ENCODE measurements at regions of chr9 and their contacts with region 1.

Region 1: DNA sequence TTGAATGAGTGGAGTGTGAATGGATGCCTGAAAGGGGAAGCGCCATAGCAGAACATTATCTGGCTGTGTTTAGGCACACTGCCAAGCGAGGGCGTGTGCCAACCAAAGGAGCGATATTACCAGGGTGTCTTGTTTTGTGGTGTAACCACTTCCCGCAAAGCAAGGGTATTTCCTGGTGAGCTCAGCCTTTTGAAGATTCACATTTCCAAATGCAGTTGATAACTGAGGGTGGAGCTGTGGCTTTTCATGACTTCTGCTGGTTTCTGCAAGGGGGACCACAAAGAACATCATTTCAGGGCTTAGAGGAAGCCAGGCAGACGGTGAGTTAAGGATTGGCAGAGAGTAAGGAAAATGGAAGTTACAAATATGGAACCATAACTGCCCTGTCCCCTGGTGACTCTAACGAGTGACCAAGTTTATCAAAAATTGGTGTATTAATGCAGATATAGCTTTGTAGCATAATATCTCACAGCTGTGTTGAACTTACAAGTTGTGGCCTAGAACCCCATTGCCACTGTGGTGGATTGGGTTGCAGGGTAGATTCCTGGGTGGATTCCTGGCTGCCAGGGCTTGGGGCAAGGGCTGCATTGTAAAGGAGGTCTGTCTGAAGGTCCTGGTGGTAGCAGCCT is 71.4 kb downstream of the RALGPS1 start:
- DNase-seq: peak; percentile 71 to 99 (median 84)
- ATAC-seq: peak; percentile 73
- H3K4me3 ChIP-seq: peak overlapping the region in 1 of 2 experiments; percentile 26
- H3K4me3 Mint-ChIP-seq: peak overlapping the region; percentile 68
- H3K27ac ChIP-seq: peak overlapping the region; percentile 23 to 27
- H3K27ac Mint-ChIP-seq: peak overlapping the region; percentile 85
- H3K4me1 ChIP-seq: peaks cover 51% of the 10 kb centered on the region
- H3K4me1 Mint-ChIP-seq: peaks cover 71% of the 10 kb centered on the region
- H3K27me3 ChIP-seq: peaks cover 3 to 17% of the 10 kb centered on the region in 2 experiments
- H3K27me3 Mint-ChIP-seq: peaks cover 65% of the 10 kb centered on the region
- CTCF ChIP-seq: no peak

Region 2: DNA sequence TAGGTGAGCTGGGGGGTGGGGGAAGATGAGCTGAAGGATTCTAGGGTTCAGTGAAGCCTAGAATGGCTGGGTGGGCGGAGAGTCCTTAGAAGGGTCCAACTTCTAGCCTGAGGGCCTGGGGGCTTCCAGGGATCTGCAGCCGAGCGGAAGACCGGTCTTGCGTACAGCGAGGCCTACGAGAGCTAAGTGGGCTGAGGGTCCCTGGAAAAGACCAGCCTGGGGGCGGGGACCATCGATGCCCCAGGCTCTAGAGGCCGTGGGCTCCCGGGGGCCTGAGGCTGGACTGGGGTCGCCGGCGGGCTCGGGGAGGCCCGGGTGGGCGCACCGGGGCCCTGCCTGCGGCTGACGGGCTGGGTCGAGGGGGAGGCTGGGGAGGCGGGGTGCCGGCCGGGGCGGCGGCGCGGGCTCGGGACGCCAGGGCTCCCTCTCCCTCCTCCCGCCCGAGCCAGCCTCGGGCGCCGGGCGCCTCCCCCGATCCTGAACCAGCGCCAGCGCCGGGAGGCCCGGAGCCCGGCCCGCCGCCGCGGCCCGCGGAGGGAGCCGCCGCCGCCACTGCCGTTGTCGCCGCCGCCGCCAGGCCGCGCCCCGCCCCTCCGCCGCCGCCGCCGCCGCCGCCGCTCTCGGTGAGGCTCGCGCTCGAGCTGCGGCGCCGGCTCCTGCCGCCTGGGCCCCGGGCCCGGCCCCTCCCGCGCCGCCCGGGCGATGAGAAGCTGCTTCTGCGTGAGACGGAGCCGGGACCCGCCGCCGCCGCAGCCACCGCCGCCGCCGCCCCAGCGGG is 659.6 kb before region 1 on chr9 and contains the start of gene MVB12B:
- CTCF ChIA-PET with region 1: no interaction called
- POLR2A ChIA-PET with region 1: no interaction called
- intact Hi-C with region 1: no loop called
- DNase-seq: peak; percentile 29 to 82 (median 53)
- ATAC-seq: peak; percentile 76
- H3K4me3 ChIP-seq: peak within 1 kb of the TSS; percentile 56 to 61
- H3K4me3 Mint-ChIP-seq: peak within 1 kb of the TSS; percentile 88
- H3K27ac ChIP-seq: peak within 1 kb of the TSS; percentile 46 to 74
- H3K27ac Mint-ChIP-seq: peak within 1 kb of the TSS; percentile 97
- H3K4me1 ChIP-seq: peaks cover 46% of the 10 kb centered on the region
- H3K4me1 Mint-ChIP-seq: peaks cover 46% of the 10 kb centered on the region
- H3K27me3 ChIP-seq: no peaks in the 10 kb centered on the region
- H3K27me3 Mint-ChIP-seq: no peaks in the 10 kb centered on the region
- CTCF ChIP-seq: no peak
- total RNA-seq, gene MVB12B: 25.7 to 26.9 TPM

Region 3: GRCh38 chr9:127004946-127005769 is 19.2 kb after region 1 on chr9:
- CTCF ChIA-PET with region 1: interaction called, 3 read pairs
- POLR2A ChIA-PET with region 1: interaction called, 10 read pairs
- intact Hi-C with region 1: loop called (anchors 1 kb)
- DNase-seq: peak; percentile 29 to 92 (median 71)
- ATAC-seq: peak; percentile 95
- H3K4me3 ChIP-seq: no peak overlapping the region
- H3K4me3 Mint-ChIP-seq: peak overlapping the region; percentile 27
- H3K27ac ChIP-seq: peak overlapping the region in 1 of 2 experiments; percentile 0
- H3K27ac Mint-ChIP-seq: peak overlapping the region; percentile 82
- H3K4me1 ChIP-seq: peaks cover 22% of the 10 kb centered on the region
- H3K4me1 Mint-ChIP-seq: peaks cover 20% of the 10 kb centered on the region
- H3K27me3 ChIP-seq: no peaks in the 10 kb centered on the region
- H3K27me3 Mint-ChIP-seq: peaks cover 26% of the 10 kb centered on the region
- CTCF ChIP-seq: no peak

Region 4: DNA sequence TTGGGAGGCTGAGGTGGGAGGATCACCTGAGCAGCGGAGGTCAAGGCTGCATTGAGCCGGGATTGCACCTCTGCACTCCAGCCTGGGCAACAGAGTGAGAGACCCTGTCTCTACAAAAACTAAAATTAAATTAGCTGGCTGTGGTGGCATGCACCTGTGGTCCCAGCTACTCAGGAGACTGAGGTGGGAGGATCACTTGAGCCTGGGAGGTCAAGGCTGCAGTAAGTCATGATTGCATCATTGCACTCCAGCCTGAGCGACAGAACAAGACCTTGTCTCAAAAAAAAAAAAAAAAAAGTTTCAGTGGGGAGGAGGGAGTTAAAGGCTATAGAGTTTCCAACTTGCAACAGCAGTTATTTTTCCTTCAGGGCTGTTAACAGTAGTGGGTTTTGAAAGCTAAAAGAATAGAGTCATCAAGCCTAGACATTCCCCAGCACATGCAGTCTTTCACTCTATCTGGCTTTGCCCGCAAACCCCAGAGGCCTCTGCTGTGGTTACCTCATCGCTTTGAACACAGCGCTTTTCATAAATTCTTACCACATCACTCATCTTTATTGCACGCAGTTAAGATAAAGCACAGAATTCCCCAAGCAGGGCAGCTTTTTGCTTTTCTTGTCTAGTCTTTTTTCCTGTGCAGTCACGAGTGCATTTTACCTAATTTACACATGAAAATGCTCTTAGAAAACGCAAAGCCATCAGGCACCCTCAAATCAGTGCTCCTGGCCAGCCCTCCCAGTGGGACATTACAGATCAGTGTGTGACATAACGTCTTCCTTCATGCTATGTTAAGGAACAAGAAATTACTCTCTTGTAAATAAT is 402.3 kb after region 1 on chr9:
- CTCF ChIA-PET with region 1: no interaction called
- POLR2A ChIA-PET with region 1: interaction called, 3 read pairs
- intact Hi-C with region 1: loop called (anchors 1 kb)
- DNase-seq: peak; percentile 73 to 96 (median 84)
- ATAC-seq: peak; percentile 97
- H3K4me3 ChIP-seq: no peak overlapping the region
- H3K4me3 Mint-ChIP-seq: peak overlapping the region; percentile 4
- H3K27ac ChIP-seq: no peak overlapping the region
- H3K27ac Mint-ChIP-seq: peak overlapping the region; percentile 7
- H3K4me1 ChIP-seq: peaks cover 18% of the 10 kb centered on the region
- H3K4me1 Mint-ChIP-seq: peaks cover 26% of the 10 kb centered on the region
- H3K27me3 ChIP-seq: peaks cover 28 to 61% of the 10 kb centered on the region in 2 experiments
- H3K27me3 Mint-ChIP-seq: peaks cover 66% of the 10 kb centered on the region
- CTCF ChIP-seq: no peak

Measured in CD8-positive, alpha-beta T cell (primary cell).